ENCODE measurements at regions of chr10 and their contacts with region 1.

Region 1: DNA sequence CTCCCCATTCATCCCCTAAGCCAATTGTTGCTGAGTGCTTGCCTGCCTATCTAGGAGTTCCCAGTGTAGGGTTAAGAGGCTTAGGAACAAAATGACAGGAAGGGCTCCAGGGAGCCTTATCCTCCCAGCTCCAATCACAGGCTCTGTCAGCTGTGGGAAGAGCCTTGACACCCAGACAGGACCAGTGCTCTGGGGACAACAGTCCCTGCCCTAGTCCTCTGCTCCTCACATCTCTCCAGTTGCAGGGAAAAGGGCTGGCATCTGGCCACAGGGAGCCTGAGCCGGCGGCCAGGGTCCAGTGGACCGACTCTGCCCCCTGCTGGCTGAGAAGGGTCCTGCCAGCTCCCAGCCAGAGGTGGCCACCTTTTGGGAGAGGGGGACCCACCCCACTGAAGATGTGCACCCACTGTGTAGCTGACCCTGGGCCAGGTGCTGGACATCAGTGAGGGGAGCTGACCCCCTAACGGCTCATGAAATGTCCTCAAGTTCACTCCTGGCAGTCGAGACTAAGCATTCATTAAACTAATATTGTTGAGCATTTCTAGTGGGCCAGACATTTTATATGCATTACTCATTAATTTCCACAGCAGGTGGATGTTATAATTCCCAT is 17.6 kb downstream of the DNAJB12 start:
- DNase-seq: peak; percentile 78
- ATAC-seq: no peak
- H3K4me3 ChIP-seq: no peak overlapping the region
- H3K4me3 Mint-ChIP-seq: no peak overlapping the region
- H3K27ac ChIP-seq: no peak overlapping the region
- H3K27ac Mint-ChIP-seq: peak overlapping the region; percentile 27
- H3K4me1 ChIP-seq: peaks cover 51 to 61% of the 10 kb centered on the region in 2 donors
- H3K4me1 Mint-ChIP-seq: peaks cover 60% of the 10 kb centered on the region
- H3K27me3 ChIP-seq: no peaks in the 10 kb centered on the region
- H3K27me3 Mint-ChIP-seq: no peaks in the 10 kb centered on the region
- CTCF ChIP-seq: peak; percentile 98

Region 2: GRCh38 chr10:72088889-72089575 is 248.1 kb before region 1 on chr10:
- CTCF ChIA-PET with region 1: interaction called, 13 read pairs
- POLR2A ChIA-PET with region 1: interaction called, 6 read pairs
- intact Hi-C with region 1: loop called (anchors 5 kb)
- DNase-seq: no peak
- ATAC-seq: no peak
- H3K4me3 ChIP-seq: peak overlapping the region in 4 of 5 experiments; percentile 79 to 93 (median 88)
- H3K4me3 Mint-ChIP-seq: peak overlapping the region; percentile 100
- H3K27ac ChIP-seq: peak overlapping the region; percentile 89 to 92
- H3K27ac Mint-ChIP-seq: peak overlapping the region; percentile 100
- H3K4me1 ChIP-seq: peaks cover 24 to 33% of the 10 kb centered on the region in 2 donors
- H3K4me1 Mint-ChIP-seq: peaks cover 47% of the 10 kb centered on the region
- H3K27me3 ChIP-seq: no peaks in the 10 kb centered on the region
- H3K27me3 Mint-ChIP-seq: no peaks in the 10 kb centered on the region
- CTCF ChIP-seq: no peak

Region 3: GRCh38 chr10:72126184-72126871 is 210.8 kb before region 1 on chr10:
- CTCF ChIA-PET with region 1: interaction called, 333 read pairs
- POLR2A ChIA-PET with region 1: interaction called, 3 read pairs
- intact Hi-C with region 1: loop called (anchors 1 kb)
- DNase-seq: peak; percentile 53
- ATAC-seq: no peak
- H3K4me3 ChIP-seq: no peak overlapping the region
- H3K4me3 Mint-ChIP-seq: no peak overlapping the region
- H3K27ac ChIP-seq: no peak overlapping the region
- H3K27ac Mint-ChIP-seq: no peak overlapping the region
- H3K4me1 ChIP-seq: no peaks in the 10 kb centered on the region
- H3K4me1 Mint-ChIP-seq: no peaks in the 10 kb centered on the region
- H3K27me3 ChIP-seq: no peaks in the 10 kb centered on the region
- H3K27me3 Mint-ChIP-seq: no peaks in the 10 kb centered on the region
- CTCF ChIP-seq: peak; percentile 25

Region 4: GRCh38 chr10:72134785-72135767 is 202.0 kb before region 1 on chr10:
- CTCF ChIA-PET with region 1: interaction called, 333 read pairs
- POLR2A ChIA-PET with region 1: interaction called, 4 read pairs
- intact Hi-C with region 1: no loop called
- DNase-seq: peak; percentile 61
- ATAC-seq: peak; percentile 64
- H3K4me3 ChIP-seq: no peak overlapping the region
- H3K4me3 Mint-ChIP-seq: no peak overlapping the region
- H3K27ac ChIP-seq: peak overlapping the region in 1 of 2 donors; percentile 56
- H3K27ac Mint-ChIP-seq: peak overlapping the region; percentile 83
- H3K4me1 ChIP-seq: peaks cover 15 to 17% of the 10 kb centered on the region in 2 donors
- H3K4me1 Mint-ChIP-seq: peaks cover 30% of the 10 kb centered on the region
- H3K27me3 ChIP-seq: no peaks in the 10 kb centered on the region
- H3K27me3 Mint-ChIP-seq: no peaks in the 10 kb centered on the region
- CTCF ChIP-seq: no peak

Region 5: GRCh38 chr10:72248468-72249151 is 88.5 kb before region 1 on chr10:
- CTCF ChIA-PET with region 1: interaction called, 48 read pairs
- POLR2A ChIA-PET with region 1: interaction called, 14 read pairs
- intact Hi-C with region 1: loop called (anchors 1 kb)
- DNase-seq: peak; percentile 85
- ATAC-seq: peak; percentile 76
- H3K4me3 ChIP-seq: peak overlapping the region in 4 of 5 experiments; percentile 26 to 49 (median 44)
- H3K4me3 Mint-ChIP-seq: peak overlapping the region; percentile 91
- H3K27ac ChIP-seq: peak overlapping the region; percentile 76 to 81
- H3K27ac Mint-ChIP-seq: peak overlapping the region; percentile 98
- H3K4me1 ChIP-seq: peaks cover 78 to 83% of the 10 kb centered on the region in 2 donors
- H3K4me1 Mint-ChIP-seq: peaks cover 80% of the 10 kb centered on the region
- H3K27me3 ChIP-seq: no peaks in the 10 kb centered on the region
- H3K27me3 Mint-ChIP-seq: no peaks in the 10 kb centered on the region
- CTCF ChIP-seq: no peak

Measured in B cell (primary cell).